Mammary epithelial cell (primary cell): ENCODE measurements at regions of chr5 and their contacts with region 1.

Region 1: GRCh38 chr5:148912714-148913398 is 86.4 kb downstream of the ADRB2 start:
- DNase-seq: peak; percentile 100
- H3K4me3 ChIP-seq: no peak overlapping the region
- H3K27ac ChIP-seq: peak overlapping the region; percentile 100
- H3K4me1 ChIP-seq: peaks cover 66% of the 10 kb centered on the region
- H3K27me3 ChIP-seq: no peaks in the 10 kb centered on the region
- CTCF ChIP-seq: peak; percentile 44 to 70

Region 2: GRCh38 chr5:148457183-148457620 is 455.7 kb before region 1 on chr5:
- CTCF ChIA-PET with region 1: no interaction called
- dilution Hi-C with region 1: no loop called
- in situ Hi-C with region 1: no loop called
- intact Hi-C with region 1: no loop called
- DNase-seq: no peak
- H3K4me3 ChIP-seq: no peak overlapping the region
- H3K27ac ChIP-seq: no peak overlapping the region
- H3K4me1 ChIP-seq: no peaks in the 10 kb centered on the region
- H3K27me3 ChIP-seq: no peaks in the 10 kb centered on the region
- CTCF ChIP-seq: peak; percentile 44 to 45

Region 3: GRCh38 chr5:148740966-148741742 is 171.7 kb before region 1 on chr5:
- CTCF ChIA-PET with region 1: no interaction called
- dilution Hi-C with region 1: no loop called
- in situ Hi-C with region 1: no loop called
- intact Hi-C with region 1: loop called (anchors 1 kb)
- DNase-seq: peak; percentile 58
- H3K4me3 ChIP-seq: no peak overlapping the region
- H3K27ac ChIP-seq: no peak overlapping the region
- H3K4me1 ChIP-seq: no peaks in the 10 kb centered on the region
- H3K27me3 ChIP-seq: no peaks in the 10 kb centered on the region
- CTCF ChIP-seq: peak; percentile 66 to 77

Region 4: GRCh38 chr5:148831590-148832565 is 81.0 kb before region 1 on chr5:
- CTCF ChIA-PET with region 1: no interaction called
- dilution Hi-C with region 1: loop called (anchors 5 kb)
- in situ Hi-C with region 1: loop called in 1 of 2 experiments (anchors 5 kb)
- intact Hi-C with region 1: loop called (anchors 1 kb)
- DNase-seq: no peak
- H3K4me3 ChIP-seq: peak overlapping the region in 1 of 3 experiments; percentile 81
- H3K27ac ChIP-seq: no peak overlapping the region
- H3K4me1 ChIP-seq: peaks cover 27% of the 10 kb centered on the region
- H3K27me3 ChIP-seq: no peaks in the 10 kb centered on the region
- CTCF ChIP-seq: no peak

Region 5: GRCh38 chr5:148957591-148958202 is 44.8 kb after region 1 on chr5:
- CTCF ChIA-PET with region 1: interaction called, 21 read pairs
- dilution Hi-C with region 1: no loop called
- in situ Hi-C with region 1: loop called in 1 of 2 experiments (anchors 5 kb)
- intact Hi-C with region 1: loop called (anchors 1 kb)
- DNase-seq: peak; percentile 33
- H3K4me3 ChIP-seq: no peak overlapping the region
- H3K27ac ChIP-seq: peak overlapping the region; percentile 73
- H3K4me1 ChIP-seq: peaks cover 18% of the 10 kb centered on the region
- H3K27me3 ChIP-seq: no peaks in the 10 kb centered on the region
- CTCF ChIP-seq: peak; percentile 90

Region 6: DNA sequence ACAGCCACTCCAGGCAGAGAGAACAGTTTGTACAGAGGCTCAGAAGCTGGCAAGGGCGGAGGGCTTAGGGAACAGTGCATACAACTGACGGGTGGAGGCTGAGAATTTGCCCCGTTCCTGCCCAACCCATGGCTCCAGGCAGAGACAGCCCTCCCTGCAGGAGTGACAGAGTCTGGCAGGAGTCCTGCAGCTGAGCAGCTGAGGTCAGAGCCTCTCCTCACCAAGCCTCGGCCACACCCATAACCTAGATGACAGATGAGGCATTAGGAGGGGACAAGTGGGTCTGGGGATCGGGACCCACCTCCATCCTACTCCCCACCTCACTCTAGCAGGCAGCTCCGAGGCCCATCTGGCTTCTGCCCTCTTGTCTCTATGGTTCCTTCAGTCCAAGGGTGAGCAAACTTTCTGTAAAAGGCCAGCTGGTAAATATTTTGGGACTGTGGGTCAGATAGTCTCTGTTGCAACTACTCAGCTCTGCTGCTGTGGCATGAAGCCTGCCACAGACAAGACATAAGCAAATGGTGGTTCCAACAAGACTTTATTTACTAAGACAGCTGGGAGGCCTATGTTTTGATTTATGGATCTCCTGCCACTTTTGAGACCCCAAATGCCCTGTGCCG is 66.4 kb after region 1 on chr5:
- CTCF ChIA-PET with region 1: no interaction called
- dilution Hi-C with region 1: loop called (anchors 5 kb)
- in situ Hi-C with region 1: no loop called
- intact Hi-C with region 1: no loop called
- DNase-seq: peak; percentile 74
- H3K4me3 ChIP-seq: no peak overlapping the region
- H3K27ac ChIP-seq: peak overlapping the region; percentile 89
- H3K4me1 ChIP-seq: peaks cover 52% of the 10 kb centered on the region
- H3K27me3 ChIP-seq: no peaks in the 10 kb centered on the region
- CTCF ChIP-seq: no peak

Region 7: DNA sequence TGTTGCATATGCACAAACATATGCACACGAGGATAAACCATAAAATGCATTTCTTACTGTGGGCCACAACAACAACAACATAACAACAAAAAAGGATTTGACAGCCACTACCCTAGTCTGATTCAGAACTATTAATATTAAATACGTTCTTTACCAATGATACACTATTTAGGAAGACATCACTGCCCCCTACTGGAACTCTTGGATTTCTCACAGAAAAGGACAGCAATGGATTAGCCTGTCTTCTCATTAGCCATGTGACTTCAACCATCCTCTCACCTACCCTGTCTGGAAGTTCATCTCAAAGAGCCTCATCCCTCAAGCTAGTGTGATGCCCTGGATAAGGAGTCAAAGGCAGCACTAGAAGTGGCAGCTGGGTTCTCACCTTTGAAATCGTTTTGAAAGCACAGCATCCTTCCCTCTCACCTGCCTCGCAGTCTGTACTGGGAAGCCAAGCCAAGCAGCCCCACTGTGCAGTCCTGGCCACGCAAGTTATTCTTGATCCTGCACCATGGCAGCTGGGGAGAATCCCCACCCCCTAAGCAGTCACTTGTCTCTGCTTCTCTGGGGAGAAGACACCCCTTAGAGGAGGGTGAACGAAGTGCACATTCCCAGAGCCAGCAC is 85.4 kb after region 1 on chr5:
- CTCF ChIA-PET with region 1: no interaction called
- dilution Hi-C with region 1: no loop called
- in situ Hi-C with region 1: no loop called
- intact Hi-C with region 1: loop called (anchors 1 kb)
- DNase-seq: peak; percentile 74
- H3K4me3 ChIP-seq: no peak overlapping the region
- H3K27ac ChIP-seq: no peak overlapping the region
- H3K4me1 ChIP-seq: peaks cover 31% of the 10 kb centered on the region
- H3K27me3 ChIP-seq: no peaks in the 10 kb centered on the region
- CTCF ChIP-seq: peak; percentile 65 to 67

Region 8: DNA sequence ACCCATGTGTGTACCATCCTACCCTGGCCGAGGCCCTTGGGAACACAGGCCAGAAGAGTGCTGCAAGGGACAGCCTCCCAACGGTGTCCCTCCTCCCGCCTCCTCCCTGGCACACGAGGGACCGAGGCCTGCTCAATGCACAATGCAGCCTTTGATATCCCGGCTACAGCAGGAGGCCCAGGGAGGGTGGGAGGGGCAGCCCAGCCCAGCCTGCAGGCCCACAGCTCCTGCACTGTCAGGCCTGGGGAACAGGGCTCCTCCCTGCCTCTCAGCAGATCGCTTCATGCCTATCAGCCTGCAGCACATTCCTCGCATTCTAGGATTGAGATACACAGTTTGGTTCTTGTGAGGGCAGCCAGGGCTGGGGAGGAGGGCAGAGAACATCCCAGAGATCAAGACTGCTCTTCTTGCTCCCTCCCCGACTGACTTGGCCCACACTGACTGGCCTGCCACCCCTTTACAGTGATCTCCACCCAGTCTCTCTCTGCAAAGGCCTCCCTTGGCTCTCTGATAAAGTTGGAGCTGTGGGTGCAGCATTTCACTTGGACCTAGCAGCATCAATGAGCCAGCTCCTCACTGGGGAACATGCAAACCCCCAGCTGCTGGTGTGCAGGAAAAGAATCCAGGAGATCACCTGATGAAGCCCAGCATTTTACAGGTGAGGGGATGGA is 150.3 kb after region 1 on chr5 and contains the start of gene SH3TC2:
- CTCF ChIA-PET with region 1: no interaction called
- dilution Hi-C with region 1: no loop called
- in situ Hi-C with region 1: no loop called
- intact Hi-C with region 1: loop called (anchors 5 kb)
- DNase-seq: peak; percentile 87
- H3K4me3 ChIP-seq: peak within 1 kb of the TSS in 2 of 3 experiments; percentile 19 to 41
- H3K27ac ChIP-seq: peak within 1 kb of the TSS; percentile 84
- H3K4me1 ChIP-seq: peaks cover 53% of the 10 kb centered on the region
- H3K27me3 ChIP-seq: no peaks in the 10 kb centered on the region
- CTCF ChIP-seq: no peak
- total RNA-seq, gene SH3TC2: 42.0 to 57.8 TPM